Activated CD8-positive, alpha-beta T cell treated with anti-CD3 and anti-CD28 coated beads, Interleukin-2, amount 10 ng/mL, durations not matched to agents 7 days and 5 days (primary cell): ENCODE measurements at regions of chr1 and their contacts with region 1.

Region 1: GRCh38 chr1:58857680-58858673 is 74.1 kb upstream of the JUN start:
- DNase-seq: peak; percentile 58
- ATAC-seq: peak; percentile 82
- H3K4me3 Mint-ChIP-seq: peak overlapping the region; percentile 53
- H3K27ac Mint-ChIP-seq: peak overlapping the region; percentile 93
- H3K4me1 Mint-ChIP-seq: peaks cover 49% of the 10 kb centered on the region
- H3K27me3 Mint-ChIP-seq: no peaks in the 10 kb centered on the region

Region 2: GRCh38 chr1:58884706-58885661 is 27.0 kb after region 1 on chr1:
- CTCF ChIA-PET with region 1: interaction called, 9 read pairs
- POLR2A ChIA-PET with region 1: interaction called, 17 read pairs
- DNase-seq: peak; percentile 37
- ATAC-seq: peak; percentile 29
- H3K4me3 Mint-ChIP-seq: no peak overlapping the region
- H3K27ac Mint-ChIP-seq: peak overlapping the region; percentile 88
- H3K4me1 Mint-ChIP-seq: peaks cover 46% of the 10 kb centered on the region
- H3K27me3 Mint-ChIP-seq: no peaks in the 10 kb centered on the region